IMR-90 (cell line): ENCODE measurements at regions of chr12 and their contacts with region 1.

Region 1: DNA sequence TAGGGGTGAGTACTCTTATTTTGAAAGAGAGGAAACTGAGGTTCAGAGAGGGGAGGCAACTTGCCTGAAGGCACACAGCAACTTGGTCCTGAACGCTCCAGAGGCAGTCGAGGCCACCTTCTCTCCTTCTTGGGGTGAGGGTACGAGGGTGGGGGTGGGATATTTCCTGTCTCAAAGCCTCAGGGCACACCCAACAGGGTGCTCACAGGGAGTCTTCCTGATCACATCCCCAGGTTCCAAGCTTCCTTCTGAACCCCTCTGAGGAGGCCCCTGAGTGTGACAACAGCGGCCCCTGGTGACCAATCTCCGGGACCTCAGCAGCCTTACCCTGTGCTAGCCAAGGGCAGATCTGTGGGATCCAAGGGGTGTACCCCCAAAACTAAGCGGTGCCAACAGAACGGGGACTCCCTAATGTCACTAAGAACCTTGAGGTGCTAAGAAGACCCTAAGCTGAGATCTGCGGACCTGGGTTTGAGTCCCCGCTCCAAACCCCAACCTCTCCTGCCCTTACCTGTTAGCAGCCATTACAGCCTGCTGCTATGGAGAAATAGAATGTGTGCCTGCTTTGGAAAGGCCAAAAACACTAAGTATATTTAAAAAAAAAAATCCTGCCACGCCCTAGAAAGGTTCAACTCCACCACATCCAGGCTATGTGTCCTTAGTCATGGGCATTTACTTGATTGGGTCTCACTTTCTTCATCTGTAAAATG is 57.9 kb downstream of the TRPV4 start:
- DNase-seq: peak; percentile 58
- ATAC-seq: peak; percentile 95
- H3K4me3 ChIP-seq: no peak overlapping the region
- H3K27ac ChIP-seq: no peak overlapping the region
- H3K4me1 ChIP-seq: no peaks in the 10 kb centered on the region
- H3K27me3 ChIP-seq: peaks cover 3% of the 10 kb centered on the region; the same call in 1 of the 2 replicates
- CTCF ChIP-seq: peak; percentile 90
- POLR2A ChIP-seq: 0 out of 2 replicates have a peak, but pooled peaks have one; percentile 31
- RAD21 ChIP-seq: peak; percentile 96

Region 2: DNA sequence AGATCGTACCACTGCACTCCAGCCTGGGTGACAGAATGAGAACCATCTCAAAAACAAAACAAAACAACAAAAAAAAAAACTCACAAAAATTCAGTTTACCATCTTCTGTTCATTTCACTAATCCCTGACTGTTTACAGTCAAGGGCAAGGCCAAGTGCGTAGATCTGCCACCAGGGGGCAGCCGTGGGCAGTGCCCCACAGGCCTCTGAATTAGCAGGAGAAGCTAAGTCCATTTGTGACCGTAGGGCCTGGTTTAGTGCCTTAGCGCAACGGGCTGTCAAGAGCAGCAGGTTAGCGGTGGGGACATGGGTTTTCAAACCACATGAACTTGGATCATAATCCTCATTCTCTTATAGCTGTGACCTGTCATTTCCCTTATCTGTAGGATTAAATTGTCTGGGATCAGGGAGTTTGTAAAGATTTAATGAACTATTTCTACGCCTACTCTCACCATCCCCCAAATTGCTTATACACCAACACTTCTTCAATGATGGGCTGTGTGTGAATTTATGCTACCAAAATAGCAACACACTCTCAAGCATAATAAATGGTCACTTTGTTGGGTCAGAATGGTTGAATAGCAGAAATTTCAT is 347.2 kb before region 1 on chr12:
- CTCF ChIA-PET with region 1: interaction called, 4 read pairs
- POLR2A ChIA-PET with region 1: no interaction called
- dilution Hi-C with region 1: no loop called
- in situ Hi-C with region 1: loop called (anchors 10 kb)
- intact Hi-C with region 1: loop called (anchors 1 kb)
- DNase-seq: peak; percentile 79
- ATAC-seq: peak; percentile 98
- H3K4me3 ChIP-seq: no peak overlapping the region
- H3K27ac ChIP-seq: no peak overlapping the region
- H3K4me1 ChIP-seq: no peaks in the 10 kb centered on the region
- H3K27me3 ChIP-seq: peaks cover 13% of the 10 kb centered on the region; the same call in 1 of the 2 replicates
- CTCF ChIP-seq: peak; percentile 96
- POLR2A ChIP-seq: no peak
- RAD21 ChIP-seq: peak; percentile 87

Region 3: DNA sequence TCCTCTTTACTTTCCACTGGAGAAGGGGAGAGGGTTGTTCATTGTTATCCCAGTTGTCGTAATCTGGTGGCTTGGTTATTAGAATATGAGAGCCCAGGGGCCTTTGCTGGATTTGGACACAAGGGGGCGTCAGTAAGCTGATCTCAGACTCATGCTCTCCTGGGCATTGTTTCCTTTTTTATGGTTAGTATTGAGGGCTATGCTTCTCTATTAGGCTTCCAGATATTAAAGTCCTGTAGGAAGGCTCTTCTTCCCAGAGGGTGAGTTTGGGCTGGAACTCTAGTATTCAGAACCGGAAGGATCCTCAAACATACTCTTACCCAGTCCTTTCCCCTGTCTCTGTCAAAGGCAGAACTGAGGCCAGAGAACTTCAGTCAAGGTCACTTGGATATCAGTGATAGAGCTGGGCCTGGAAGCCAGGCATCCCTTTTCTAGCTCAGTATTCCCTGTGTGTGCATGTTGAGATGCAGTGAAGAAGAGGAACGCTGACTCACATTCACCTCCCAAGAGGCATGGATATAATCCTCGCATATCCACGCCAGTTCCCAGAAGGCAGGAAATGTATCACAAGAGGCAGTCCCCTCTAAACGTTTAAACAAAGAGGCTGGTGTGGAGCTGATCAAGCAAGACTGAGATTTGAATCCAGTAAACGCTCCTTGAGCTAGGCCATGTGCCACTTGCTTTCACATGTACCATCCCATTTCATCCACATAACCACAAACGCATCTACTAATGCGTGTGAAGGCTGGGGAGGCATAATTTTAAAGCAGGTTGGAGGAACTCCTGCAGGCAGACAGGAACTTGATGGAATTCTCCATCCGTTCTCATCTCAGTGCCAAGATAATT is 256.3 kb before region 1 on chr12:
- CTCF ChIA-PET with region 1: interaction called, 4 read pairs
- POLR2A ChIA-PET with region 1: no interaction called
- dilution Hi-C with region 1: no loop called
- in situ Hi-C with region 1: loop called (anchors 5 kb)
- intact Hi-C with region 1: loop called (anchors 1 kb)
- DNase-seq: peak; percentile 92
- ATAC-seq: peak; percentile 91
- H3K4me3 ChIP-seq: no peak overlapping the region
- H3K27ac ChIP-seq: peak overlapping the region; percentile 67
- H3K4me1 ChIP-seq: peaks cover 7% of the 10 kb centered on the region
- H3K27me3 ChIP-seq: no peaks in the 10 kb centered on the region
- CTCF ChIP-seq: peak; percentile 84
- POLR2A ChIP-seq: no peak
- RAD21 ChIP-seq: peak; percentile 82

Region 4: GRCh38 chr12:109592905-109593272 is 182.4 kb before region 1 on chr12:
- CTCF ChIA-PET with region 1: interaction called, 36 read pairs
- POLR2A ChIA-PET with region 1: no interaction called
- dilution Hi-C with region 1: no loop called
- in situ Hi-C with region 1: loop called (anchors 5 kb)
- intact Hi-C with region 1: loop called (anchors 1 kb)
- DNase-seq: no peak
- ATAC-seq: no peak
- H3K4me3 ChIP-seq: no peak overlapping the region
- H3K27ac ChIP-seq: no peak overlapping the region
- H3K4me1 ChIP-seq: peaks cover under 1% of the 10 kb centered on the region; the same call in 1 of the 2 replicates
- H3K27me3 ChIP-seq: no peaks in the 10 kb centered on the region
- CTCF ChIP-seq: no peak
- POLR2A ChIP-seq: no peak
- RAD21 ChIP-seq: no peak

Region 5: GRCh38 chr12:109597795-109598427 is 177.4 kb before region 1 on chr12:
- CTCF ChIA-PET with region 1: interaction called, 36 read pairs
- POLR2A ChIA-PET with region 1: no interaction called
- dilution Hi-C with region 1: no loop called
- in situ Hi-C with region 1: loop called (anchors 5 kb)
- intact Hi-C with region 1: loop called (anchors 1 kb)
- DNase-seq: peak; percentile 75
- ATAC-seq: peak; percentile 100
- H3K4me3 ChIP-seq: no peak overlapping the region
- H3K27ac ChIP-seq: no peak overlapping the region
- H3K4me1 ChIP-seq: peaks cover 2% of the 10 kb centered on the region; the same call in 1 of the 2 replicates
- H3K27me3 ChIP-seq: peaks cover 5% of the 10 kb centered on the region; the same call in 1 of the 2 replicates
- CTCF ChIP-seq: peak; percentile 97
- POLR2A ChIP-seq: no peak
- RAD21 ChIP-seq: peak; percentile 86

Region 6: GRCh38 chr12:109719236-109720022 is 55.9 kb before region 1 on chr12:
- CTCF ChIA-PET with region 1: interaction called, 3 read pairs
- POLR2A ChIA-PET with region 1: no interaction called
- dilution Hi-C with region 1: no loop called
- in situ Hi-C with region 1: no loop called
- intact Hi-C with region 1: loop called (anchors 5 kb)
- DNase-seq: peak; percentile 5
- ATAC-seq: peak; percentile 63
- H3K4me3 ChIP-seq: no peak overlapping the region
- H3K27ac ChIP-seq: no peak overlapping the region
- H3K4me1 ChIP-seq: peaks cover 2% of the 10 kb centered on the region; the same call in 1 of the 2 replicates
- H3K27me3 ChIP-seq: peaks cover 59% of the 10 kb centered on the region
- CTCF ChIP-seq: peak; percentile 24
- POLR2A ChIP-seq: no peak
- RAD21 ChIP-seq: no peak

Region 7: GRCh38 chr12:109758376-109759075 is 16.8 kb before region 1 on chr12:
- CTCF ChIA-PET with region 1: no interaction called
- POLR2A ChIA-PET with region 1: no interaction called
- dilution Hi-C with region 1: no loop called
- in situ Hi-C with region 1: no loop called
- intact Hi-C with region 1: no loop called
- DNase-seq: no peak
- ATAC-seq: no peak
- H3K4me3 ChIP-seq: no peak overlapping the region
- H3K27ac ChIP-seq: no peak overlapping the region
- H3K4me1 ChIP-seq: no peaks in the 10 kb centered on the region
- H3K27me3 ChIP-seq: peaks cover 23% of the 10 kb centered on the region; the same call in 1 of the 2 replicates
- CTCF ChIP-seq: no peak
- POLR2A ChIP-seq: no peak
- RAD21 ChIP-seq: no peak